Heart right ventricle (tissue), 16 donors: ENCODE measurements at regions of chr12 and their contacts with region 1.

Region 1: DNA sequence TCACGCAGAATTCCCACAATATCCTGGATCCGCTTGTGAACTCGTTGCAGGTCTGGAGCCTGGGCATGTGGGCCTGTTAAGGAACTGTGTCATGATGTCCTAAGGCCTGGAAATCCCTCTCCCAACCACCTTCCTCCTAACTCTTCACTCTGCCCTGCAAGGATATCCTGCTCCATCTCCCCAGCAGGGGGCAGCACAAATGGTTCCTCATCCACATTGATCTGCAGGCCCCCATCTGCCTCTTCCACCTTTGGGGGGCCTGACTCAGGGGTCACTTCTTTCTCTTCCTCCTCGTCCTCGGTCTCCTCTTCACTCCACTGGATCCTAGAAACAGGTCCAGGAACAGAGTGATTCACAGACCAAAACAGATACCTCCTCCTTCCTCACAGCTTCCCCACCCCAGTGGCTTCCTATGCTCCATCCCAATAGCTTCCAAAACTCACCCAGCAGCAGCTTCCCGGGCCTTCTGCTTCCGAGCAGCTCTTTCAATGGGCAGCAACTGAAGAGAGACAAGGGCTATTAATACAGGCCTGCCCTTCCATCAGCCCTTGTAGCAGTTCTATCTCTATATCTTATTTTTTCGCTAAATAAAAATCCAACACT is 4.5 kb downstream of the NOP2 start:
- DNase-seq: peak in 1 of 2 donors; percentile 54
- ATAC-seq: peak in 1 of 8 donors; percentile 22
- H3K4me3 ChIP-seq: no peak overlapping the region
- H3K27ac ChIP-seq: no peak overlapping the region
- H3K4me1 ChIP-seq: peaks cover 0 to 18% (median 15%) of the 10 kb centered on the region in 9 donors
- H3K27me3 ChIP-seq: no peaks in the 10 kb centered on the region
- CTCF ChIP-seq: peak; percentile 61 to 84 (median 78)

Region 2: DNA sequence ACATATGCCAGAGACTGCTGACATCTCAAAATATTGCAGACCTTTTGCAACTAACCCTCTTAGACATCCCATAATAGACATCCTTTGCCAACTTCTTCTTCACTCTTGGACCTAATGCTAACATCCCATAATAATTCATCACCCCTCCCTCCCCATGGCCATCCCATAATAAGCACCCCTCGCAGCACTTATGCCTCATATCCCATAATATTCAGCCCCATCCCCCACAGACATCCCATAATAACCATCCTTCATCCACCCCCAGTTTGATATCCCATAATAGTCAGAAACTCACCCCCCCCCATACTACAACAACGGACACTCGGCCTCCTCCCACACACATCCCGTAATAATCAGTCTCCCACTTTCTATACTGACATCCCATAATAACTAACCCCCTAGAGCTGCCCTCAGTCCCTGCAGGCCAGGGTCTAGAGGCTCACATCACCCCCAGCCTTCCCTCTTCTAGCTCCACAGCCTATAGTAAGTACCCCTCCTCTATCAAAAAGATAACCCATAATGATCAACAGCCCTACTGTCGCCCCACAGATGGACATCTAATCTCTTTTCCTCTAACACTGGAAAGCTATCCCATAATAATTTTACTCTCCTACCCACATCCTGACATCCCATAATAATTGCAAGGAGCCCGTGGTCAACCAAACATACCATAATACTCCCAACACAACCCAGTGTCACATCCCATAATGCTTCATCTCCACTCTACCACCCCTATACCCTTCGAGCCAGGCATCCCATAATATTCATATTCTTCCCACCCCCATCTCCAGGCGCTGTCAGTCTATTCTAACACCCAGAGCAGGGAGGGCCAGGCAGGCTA is 44.4 kb after region 1 on chr12:
- intact Hi-C with region 1: loop called in 4 of 10 experiments (anchors 5 kb)
- DNase-seq: peak in 1 of 2 donors; percentile 77
- ATAC-seq: peak in 7 of 8 donors; percentile 3 to 34 (median 14)
- H3K4me3 ChIP-seq: no peak overlapping the region
- H3K27ac ChIP-seq: peak overlapping the region in 9 of 10 donors; percentile 7 to 79 (median 66)
- H3K4me1 ChIP-seq: peaks cover 19 to 59% (median 50%) of the 10 kb centered on the region in 9 donors
- H3K27me3 ChIP-seq: no peaks in the 10 kb centered on the region
- CTCF ChIP-seq: no peak

Region 3: DNA sequence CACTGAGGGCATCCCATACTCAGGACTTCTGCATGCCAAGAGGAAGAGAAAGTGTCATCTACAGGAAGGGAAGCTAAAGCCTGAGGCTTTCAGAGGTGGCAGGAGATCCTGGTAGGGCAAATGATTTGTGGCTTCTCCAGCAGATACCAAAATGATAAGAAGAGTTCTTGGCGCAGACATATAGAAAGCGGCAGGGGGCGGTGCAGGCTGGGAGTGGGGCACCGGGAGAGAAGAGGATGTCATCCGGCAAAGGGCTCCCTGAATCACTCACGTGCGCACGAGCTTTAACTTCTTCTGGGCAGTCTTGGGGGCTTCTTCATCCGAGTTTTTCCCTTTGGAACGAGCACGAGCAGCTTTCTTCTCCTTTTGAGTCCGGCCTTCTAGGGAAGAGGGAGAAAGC is 88.8 kb after region 1 on chr12:
- intact Hi-C with region 1: loop called in 1 of 10 experiments (anchors 5 kb)
- DNase-seq: no peak
- ATAC-seq: no peak
- H3K4me3 ChIP-seq: no peak overlapping the region
- H3K27ac ChIP-seq: no peak overlapping the region
- H3K4me1 ChIP-seq: peaks cover 0 to 22% (median 10%) of the 10 kb centered on the region in 9 donors
- H3K27me3 ChIP-seq: no peaks in the 10 kb centered on the region
- CTCF ChIP-seq: no peak